ENCODE measurements at regions of chr2 and their contacts with region 1.

Region 1: GRCh38 chr2:43226558-43226954 is at the start of gene ZFP36L2:
- DNase-seq: peak; percentile 96 to 98
- ATAC-seq: peak; percentile 77 to 92 (median 82)
- H3K4me3 ChIP-seq: peak within 1 kb of the TSS; percentile 72 to 97 (median 90)
- H3K27ac ChIP-seq: peak within 1 kb of the TSS; percentile 96 to 100 (median 99)
- H3K4me1 ChIP-seq: peaks cover 0 to 61% (median 47%) of the 10 kb centered on the region in 9 donors
- H3K27me3 ChIP-seq: no peaks in the 10 kb centered on the region
- CTCF ChIP-seq: peak in 2 of 9 donors; percentile 13 to 17
- total RNA-seq, gene ZFP36L2: 34.4 to 69.6 (median 42.3) TPM

Region 2: GRCh38 chr2:42828487-42829425 is 397.8 kb before region 1 on chr2:
- intact Hi-C with region 1: loop called in 8 of 10 experiments (anchors 1 to 5 kb)
- DNase-seq: peak; percentile 75 to 77
- ATAC-seq: peak; percentile 87 to 97 (median 92)
- H3K4me3 ChIP-seq: peak overlapping the region in 1 of 10 donors; percentile 56
- H3K27ac ChIP-seq: peak overlapping the region in 7 of 10 donors; percentile 8 to 68 (median 57)
- H3K4me1 ChIP-seq: peaks cover 0 to 33% (median 27%) of the 10 kb centered on the region in 9 donors
- H3K27me3 ChIP-seq: no peaks in the 10 kb centered on the region
- CTCF ChIP-seq: peak; percentile 86 to 96 (median 94)

Region 3: DNA sequence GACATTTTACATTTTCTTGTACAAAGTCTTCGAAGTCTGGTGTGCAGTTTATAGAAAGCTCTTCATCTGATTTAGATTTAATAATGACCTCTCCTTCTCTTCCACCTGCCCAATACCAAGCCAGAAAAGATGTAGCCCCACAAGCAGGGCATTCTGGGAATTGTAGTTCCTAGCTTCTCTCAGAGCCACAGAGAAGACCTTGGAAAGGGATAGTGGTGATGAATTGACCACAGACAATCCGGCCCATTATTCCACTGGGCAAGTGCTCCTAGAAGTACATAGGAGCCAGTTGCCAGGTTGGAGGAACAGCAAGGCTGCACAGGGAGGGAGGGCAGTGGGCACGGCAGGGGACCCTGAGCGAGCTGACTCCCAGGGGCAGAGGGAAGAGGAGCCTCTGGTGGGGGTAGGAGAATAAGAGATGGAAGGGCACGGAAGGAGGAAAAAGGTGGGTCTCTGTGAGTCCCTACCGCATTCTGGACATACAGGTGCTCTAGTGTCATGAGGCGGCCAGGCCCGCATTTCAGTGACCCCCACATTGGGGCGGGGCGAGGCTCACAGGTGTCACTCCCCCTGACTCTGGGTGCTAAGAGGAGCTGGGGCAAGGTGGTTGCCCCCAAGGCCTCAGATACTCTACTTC is 281.7 kb before region 1 on chr2:
- intact Hi-C with region 1: loop called in 9 of 10 experiments (anchors 1 to 10 kb)
- DNase-seq: no peak
- ATAC-seq: no peak
- H3K4me3 ChIP-seq: no peak overlapping the region
- H3K27ac ChIP-seq: peak overlapping the region in 2 of 10 donors; percentile 23 to 66
- H3K4me1 ChIP-seq: peaks cover 0 to 43% (median 22%) of the 10 kb centered on the region in 9 donors
- H3K27me3 ChIP-seq: no peaks in the 10 kb centered on the region
- CTCF ChIP-seq: no peak

Region 4: DNA sequence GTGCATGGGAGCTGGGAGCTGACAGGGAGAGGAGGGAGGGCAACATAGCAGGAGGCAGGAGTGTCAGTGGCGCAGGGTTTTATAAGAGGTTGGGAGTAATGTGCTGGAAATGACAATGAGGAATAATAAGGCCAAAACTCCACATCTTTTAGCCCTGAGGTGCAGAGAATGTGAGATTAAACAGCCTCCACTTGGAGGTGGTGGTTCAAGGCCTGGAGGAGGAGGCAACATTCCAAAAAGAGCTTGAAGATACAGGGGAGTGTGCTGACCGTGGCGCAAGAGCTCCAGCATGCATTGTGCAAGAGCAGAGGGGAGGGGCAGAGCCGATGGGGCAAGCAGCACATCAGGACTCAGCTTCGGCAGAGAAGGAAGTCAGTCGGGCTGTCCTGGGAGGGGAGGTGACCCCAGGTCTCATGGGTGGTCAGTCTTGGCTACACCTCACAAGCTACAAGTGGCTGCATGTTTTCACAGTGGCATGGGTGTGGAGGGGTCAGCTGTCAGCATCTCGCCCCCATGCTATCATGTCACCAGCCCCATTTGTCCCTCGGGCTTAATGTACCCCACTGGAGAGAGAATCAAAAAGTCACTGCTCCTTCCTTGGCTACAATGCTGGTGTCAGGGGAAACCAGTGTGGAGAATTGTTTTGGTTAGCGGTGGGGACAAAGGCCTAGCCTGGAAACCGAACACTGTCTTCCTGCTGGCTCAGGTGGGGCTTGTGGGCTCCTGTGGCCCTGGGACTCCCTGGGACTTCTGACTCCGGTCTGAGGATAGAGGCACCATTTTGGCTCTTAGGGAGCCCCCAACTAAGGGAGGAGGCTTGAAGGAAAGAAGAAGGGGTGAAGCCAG is 208.2 kb before region 1 on chr2:
- intact Hi-C with region 1: loop called in 5 of 10 experiments (anchors 2 to 5 kb)
- DNase-seq: peak; percentile 66 to 79
- ATAC-seq: peak; percentile 62 to 92 (median 87)
- H3K4me3 ChIP-seq: no peak overlapping the region
- H3K27ac ChIP-seq: peak overlapping the region; percentile 59 to 89 (median 79)
- H3K4me1 ChIP-seq: peaks cover 0 to 42% (median 22%) of the 10 kb centered on the region in 9 donors
- H3K27me3 ChIP-seq: no peaks in the 10 kb centered on the region
- CTCF ChIP-seq: no peak

Region 5: DNA sequence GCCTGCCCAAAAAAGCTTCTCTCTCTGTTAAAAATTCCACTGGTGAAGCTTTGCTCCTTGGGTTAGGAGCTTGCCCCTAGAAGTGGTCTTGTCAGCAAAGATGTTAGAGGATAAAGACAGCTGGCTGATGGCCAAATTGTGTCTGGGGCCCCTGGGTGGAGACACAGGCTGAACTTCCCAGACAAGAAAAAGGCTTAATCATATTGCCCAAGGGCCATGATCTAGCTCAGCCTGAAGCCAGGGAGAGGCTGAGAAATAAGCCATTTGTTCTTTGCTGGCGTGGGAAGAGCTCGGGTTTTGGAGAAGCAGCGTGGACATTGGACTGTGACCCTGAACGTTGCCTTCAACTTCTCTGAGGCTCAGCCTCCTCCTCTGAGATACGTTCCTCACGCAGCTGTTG is 153.2 kb before region 1 on chr2:
- intact Hi-C with region 1: loop called in 1 of 10 experiments (anchors 5 kb)
- DNase-seq: peak in 1 of 2 donors; percentile 41
- ATAC-seq: peak in 5 of 8 donors; percentile 6 to 54 (median 16)
- H3K4me3 ChIP-seq: no peak overlapping the region
- H3K27ac ChIP-seq: peak overlapping the region; percentile 37 to 95 (median 75)
- H3K4me1 ChIP-seq: peaks cover 51 to 90% (median 67%) of the 10 kb centered on the region in 9 donors
- H3K27me3 ChIP-seq: no peaks in the 10 kb centered on the region
- CTCF ChIP-seq: no peak

Region 6: GRCh38 chr2:43131024-43131889 is 95.3 kb before region 1 on chr2:
- intact Hi-C with region 1: loop called (anchors 2 to 5 kb)
- DNase-seq: peak; percentile 61 to 67
- ATAC-seq: peak; percentile 31 to 76 (median 52)
- H3K4me3 ChIP-seq: peak overlapping the region in 1 of 10 donors; percentile 10
- H3K27ac ChIP-seq: peak overlapping the region in 9 of 10 donors; percentile 20 to 89 (median 46)
- H3K4me1 ChIP-seq: peaks cover 19 to 99% (median 52%) of the 10 kb centered on the region in 9 donors
- H3K27me3 ChIP-seq: no peaks in the 10 kb centered on the region
- CTCF ChIP-seq: peak; percentile 25 to 64 (median 55)

Region 7: DNA sequence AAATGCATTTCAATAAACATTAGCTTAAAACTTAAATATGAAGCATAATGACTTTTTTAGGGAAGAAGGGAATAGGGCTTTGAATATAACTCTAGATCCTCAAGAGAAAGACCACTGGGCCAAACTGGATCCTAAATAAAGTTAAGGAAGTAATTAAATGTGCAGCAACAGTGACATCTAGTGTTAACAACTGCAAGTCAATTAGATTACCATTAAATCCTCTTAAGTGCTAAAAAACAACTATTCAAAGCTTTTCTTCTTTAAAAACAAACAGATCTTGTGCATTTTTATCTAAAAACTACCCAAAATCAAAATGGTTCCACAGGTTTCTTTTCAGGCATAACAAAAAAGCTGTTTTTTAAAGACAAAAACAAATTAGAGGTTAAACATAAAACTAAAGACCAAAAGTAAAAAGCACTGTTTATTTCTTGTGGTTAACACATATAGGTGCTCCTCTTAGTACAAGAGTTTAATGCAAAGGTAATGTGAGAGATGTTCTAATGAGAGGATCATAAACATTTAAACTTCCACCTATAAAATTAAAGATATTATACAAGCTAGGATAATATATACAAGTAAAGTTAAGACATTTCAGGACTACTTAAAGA is 257.9 kb after region 1 on chr2:
- intact Hi-C with region 1: loop called in 9 of 10 experiments (anchors 2 to 10 kb)
- DNase-seq: peak in 1 of 2 donors; percentile 20
- ATAC-seq: peak in 6 of 8 donors; percentile 60 to 68 (median 64)
- H3K4me3 ChIP-seq: no peak overlapping the region
- H3K27ac ChIP-seq: peak overlapping the region in 5 of 10 donors; percentile 13 to 69 (median 65)
- H3K4me1 ChIP-seq: peaks cover 8 to 48% (median 29%) of the 10 kb centered on the region in 9 donors
- H3K27me3 ChIP-seq: no peaks in the 10 kb centered on the region
- CTCF ChIP-seq: peak; percentile 27 to 83 (median 71)

Measured in heart right ventricle (tissue), 16 donors.